ENCODE measurements at regions of chr7 and their contacts with region 1.

Region 1: DNA sequence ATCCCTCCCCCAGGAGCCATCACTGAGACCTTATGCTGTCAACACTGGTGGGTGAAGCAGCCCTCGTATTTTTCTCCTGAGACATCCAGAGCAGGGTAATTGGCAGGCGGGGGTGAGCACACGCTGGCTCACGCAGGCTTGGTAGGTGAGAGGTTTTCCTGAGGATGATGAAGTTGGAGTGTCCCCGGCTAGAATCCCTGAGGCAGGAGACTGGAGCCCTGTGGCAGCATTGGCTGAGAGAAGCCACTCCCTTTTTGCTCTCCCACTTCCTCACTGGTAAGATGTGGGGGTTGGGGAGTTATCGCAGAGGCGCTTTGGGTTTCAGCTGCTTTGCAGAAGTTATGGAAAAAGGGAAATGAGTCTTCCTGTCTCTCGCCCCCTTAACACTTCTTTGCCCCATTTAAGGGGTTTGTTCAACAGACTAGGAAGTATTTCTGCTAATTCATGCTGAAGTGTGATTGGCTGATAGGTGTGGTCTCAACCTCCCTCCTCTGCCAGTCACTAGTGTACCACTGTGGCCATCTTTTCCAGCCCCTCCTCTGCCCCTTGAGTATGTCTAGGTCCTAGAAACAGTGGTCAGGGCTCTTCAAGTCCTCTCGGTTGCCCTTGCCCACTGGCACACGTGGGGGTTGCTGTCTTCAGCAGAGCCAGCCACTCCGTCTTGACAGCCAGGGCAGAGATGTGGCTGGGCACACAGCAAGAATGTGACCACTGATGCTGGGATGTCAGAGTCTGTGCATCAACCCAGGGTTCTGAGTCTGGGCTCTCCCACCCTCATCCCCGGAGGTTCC is 5.7 kb downstream of the ARPC1B start:
- DNase-seq: peak; percentile 88
- ATAC-seq: peak; percentile 29
- H3K4me3 ChIP-seq: peak overlapping the region; percentile 40 to 72 (median 48)
- H3K4me3 Mint-ChIP-seq: peak overlapping the region; percentile 90
- H3K27ac ChIP-seq: peak overlapping the region; percentile 94 to 96
- H3K27ac Mint-ChIP-seq: peak overlapping the region; percentile 92
- H3K4me1 ChIP-seq: peaks cover 62 to 93% of the 10 kb centered on the region in 2 donors
- H3K4me1 Mint-ChIP-seq: peaks cover 56% of the 10 kb centered on the region
- H3K27me3 ChIP-seq: no peaks in the 10 kb centered on the region
- H3K27me3 Mint-ChIP-seq: no peaks in the 10 kb centered on the region
- CTCF ChIP-seq: no peak

Region 2: DNA sequence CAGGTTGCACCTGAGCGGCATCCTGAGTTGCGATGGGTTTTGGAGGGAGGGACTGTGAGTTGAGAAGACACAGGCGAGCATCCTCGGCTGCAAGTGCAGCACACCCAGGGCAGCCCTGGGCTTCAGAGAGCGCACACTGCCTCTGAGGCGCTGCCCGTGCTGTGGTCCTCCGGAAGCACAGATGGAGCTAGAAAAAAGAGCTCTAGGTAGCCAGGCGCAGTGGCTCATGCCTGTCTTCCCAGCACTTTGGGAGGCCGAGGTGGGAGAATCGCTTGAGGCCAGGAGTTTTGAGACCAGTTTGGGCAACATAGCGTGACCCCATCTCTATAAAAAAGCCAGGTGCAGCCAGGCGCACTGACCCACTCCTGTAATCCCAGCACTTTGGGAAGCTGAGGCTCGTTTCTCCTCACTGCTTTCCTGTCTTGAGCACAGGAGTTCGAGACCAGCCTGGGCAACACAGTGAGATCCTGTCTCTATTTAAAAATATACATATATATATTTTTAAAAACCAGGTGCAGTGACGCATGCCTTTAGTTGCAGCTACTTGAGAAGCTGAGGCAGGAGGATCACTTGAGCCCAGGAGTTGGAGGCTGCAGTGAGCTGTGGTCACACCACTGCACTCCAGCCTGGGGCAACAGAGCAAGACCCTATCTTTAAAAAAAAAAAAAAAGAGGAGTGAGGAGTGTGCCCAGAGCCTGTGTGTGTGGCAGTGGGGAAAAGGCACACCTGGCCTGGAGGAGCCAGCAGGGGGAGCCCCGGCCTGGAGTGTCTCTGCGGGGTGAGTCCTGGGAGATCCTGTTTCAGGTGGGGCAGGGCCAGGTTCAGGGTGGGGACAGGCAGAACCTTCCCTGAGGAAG is 15.0 kb before region 1 on chr7:
- CTCF ChIA-PET with region 1: interaction called, 24 read pairs
- POLR2A ChIA-PET with region 1: interaction called, 7 read pairs
- intact Hi-C with region 1: no loop called
- DNase-seq: peak; percentile 73
- ATAC-seq: peak; percentile 96
- H3K4me3 ChIP-seq: no peak overlapping the region
- H3K4me3 Mint-ChIP-seq: no peak overlapping the region
- H3K27ac ChIP-seq: no peak overlapping the region
- H3K27ac Mint-ChIP-seq: no peak overlapping the region
- H3K4me1 ChIP-seq: no peaks in the 10 kb centered on the region
- H3K4me1 Mint-ChIP-seq: peaks cover 1% of the 10 kb centered on the region
- H3K27me3 ChIP-seq: no peaks in the 10 kb centered on the region
- H3K27me3 Mint-ChIP-seq: no peaks in the 10 kb centered on the region
- CTCF ChIP-seq: peak; percentile 76

Region 3: DNA sequence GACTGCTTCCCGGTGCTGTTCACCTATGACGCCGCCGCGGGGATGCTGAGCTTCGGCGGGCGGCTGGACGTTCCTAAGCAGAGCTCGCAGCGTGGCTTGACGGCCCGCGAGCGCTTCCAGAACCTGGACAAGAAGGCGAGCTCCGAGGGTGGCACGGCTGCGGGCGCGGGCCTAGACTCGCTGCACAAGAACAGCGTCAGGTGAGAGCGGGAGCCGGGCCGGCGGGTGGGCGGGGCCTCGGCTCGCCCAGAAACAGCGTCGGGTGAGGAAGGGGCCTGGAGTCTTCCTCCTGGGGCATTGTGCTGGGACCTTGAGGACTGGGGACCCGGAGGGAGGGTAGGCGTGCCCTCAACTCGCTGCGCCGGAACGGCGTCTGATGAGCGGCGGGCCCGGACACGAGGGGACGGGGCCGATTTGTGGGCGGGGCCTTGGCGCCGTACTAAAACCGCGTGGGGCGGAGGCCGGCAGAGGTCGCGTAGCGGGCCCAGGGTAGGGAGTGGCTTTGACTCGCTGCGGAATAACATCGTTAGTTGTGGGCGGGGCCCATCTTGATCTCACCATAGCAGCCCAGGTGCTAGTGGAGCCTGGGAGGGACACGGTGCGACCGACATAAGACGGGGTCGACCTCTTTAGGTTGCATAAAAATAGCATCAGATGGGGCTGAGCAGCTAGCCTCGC is 12.6 kb after region 1 on chr7:
- CTCF ChIA-PET with region 1: interaction called, 7 read pairs
- POLR2A ChIA-PET with region 1: interaction called, 9 read pairs
- intact Hi-C with region 1: loop called (anchors 1 kb)
- DNase-seq: peak; percentile 90
- ATAC-seq: peak; percentile 95
- H3K4me3 ChIP-seq: peak overlapping the region; percentile 16 to 59 (median 50)
- H3K4me3 Mint-ChIP-seq: peak overlapping the region; percentile 94
- H3K27ac ChIP-seq: peak overlapping the region; percentile 43 to 65
- H3K27ac Mint-ChIP-seq: peak overlapping the region; percentile 93
- H3K4me1 ChIP-seq: peaks cover 12 to 20% of the 10 kb centered on the region in 2 donors
- H3K4me1 Mint-ChIP-seq: peaks cover 22% of the 10 kb centered on the region
- H3K27me3 ChIP-seq: no peaks in the 10 kb centered on the region
- H3K27me3 Mint-ChIP-seq: no peaks in the 10 kb centered on the region
- CTCF ChIP-seq: no peak

Measured in B cell (primary cell).